ENCODE measurements at regions of chr18 and their contacts with region 1.

Region 1: GRCh38 chr18:463827-464541 is 36.5 kb downstream of the COLEC12 start:
- DNase-seq: no peak

Region 2: GRCh38 chr18:379681-380330 is 84.2 kb before region 1 on chr18:
- intact Hi-C with region 1: no loop called
- DNase-seq: peak in 7 of 42 donors; percentile 6 to 46 (median 29)

Region 3: GRCh38 chr18:394997-395383 is 69.0 kb before region 1 on chr18:
- intact Hi-C with region 1: loop called (anchors 10 kb)
- DNase-seq: peak in 1 of 42 donors; percentile 10

Measured in head of caudate nucleus (tissue), 42 donors.